Common myeloid progenitor, CD34-positive (primary cell): ENCODE measurements at regions of chr3 and their contacts with region 1.

Region 1: DNA sequence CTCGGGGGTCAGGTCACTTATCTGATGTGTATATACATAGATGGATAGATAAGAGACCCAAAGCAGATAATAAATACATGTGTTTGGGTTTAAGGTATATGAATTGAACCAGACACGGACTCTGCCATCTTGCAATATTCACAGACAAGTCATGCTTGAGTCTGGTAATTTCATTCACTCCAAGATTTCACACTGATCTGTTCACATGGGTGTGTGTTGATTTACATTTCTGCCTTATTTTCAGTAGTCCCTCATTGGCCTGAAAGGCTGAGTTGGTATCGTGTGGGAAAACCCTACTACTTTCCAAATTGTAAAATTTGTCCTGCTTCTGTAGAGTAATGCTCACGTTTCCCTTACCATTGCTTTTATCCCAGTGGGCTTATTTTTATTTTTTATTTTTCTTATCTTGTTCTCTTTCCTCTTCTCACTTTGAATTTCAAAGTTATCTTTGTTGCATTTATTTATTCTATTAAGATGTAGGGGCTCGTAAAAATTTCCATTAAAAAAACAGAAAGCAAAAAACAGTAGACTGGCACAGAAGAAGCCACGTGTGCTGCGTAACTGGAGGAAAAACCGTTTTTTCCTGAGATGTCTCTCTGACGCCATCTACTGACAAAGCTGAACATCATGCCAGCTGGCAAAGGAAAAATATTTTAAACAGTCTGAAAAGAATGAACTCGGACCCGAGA is 10.8 kb upstream of the MFSD1 start:
- DNase-seq: peak; percentile 79 to 87 (median 87)
- H3K4me3 ChIP-seq: peak overlapping the region in 4 of 7 experiments; percentile 2 to 60 (median 19)
- H3K27ac ChIP-seq: no peak overlapping the region
- H3K4me1 ChIP-seq: peaks cover 2 to 5% (median 4%) of the 10 kb centered on the region in 4 experiments
- H3K27me3 ChIP-seq: no peaks in the 10 kb centered on the region

Region 2: DNA sequence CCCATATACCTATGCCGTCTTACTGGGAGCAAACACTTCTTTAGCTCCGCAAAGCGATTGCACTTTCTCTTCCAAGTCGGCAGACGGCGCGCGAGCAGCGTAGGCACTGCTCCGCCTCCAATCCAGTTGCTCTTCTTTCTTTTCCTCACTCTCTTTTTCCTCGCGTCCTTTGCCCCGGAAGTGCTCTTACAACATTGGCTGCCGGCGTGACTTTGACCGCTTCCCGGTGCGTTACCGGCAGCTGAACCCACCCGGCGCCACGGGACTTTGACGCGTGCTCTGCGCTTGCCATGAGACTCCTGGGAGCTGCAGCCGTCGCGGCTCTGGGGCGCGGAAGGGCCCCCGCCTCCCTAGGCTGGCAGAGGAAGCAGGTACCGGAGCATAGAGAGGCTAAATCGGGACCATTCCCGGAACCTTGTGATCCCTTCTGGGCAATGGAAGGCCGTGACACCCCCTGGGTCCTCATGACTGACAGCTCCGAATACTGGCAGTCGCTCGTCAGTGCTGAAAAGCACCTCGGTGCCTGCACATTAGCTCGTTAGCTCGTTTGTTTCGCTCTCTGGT is 146.6 kb before region 1 on chr3 and contains the start of gene GFM1:
- CTCF ChIA-PET with region 1: interaction called, 11 read pairs
- POLR2A ChIA-PET with region 1: no interaction called
- DNase-seq: peak; percentile 97 to 98 (median 97)
- H3K4me3 ChIP-seq: peak within 1 kb of the TSS; percentile 50 to 99 (median 89)
- H3K27ac ChIP-seq: peak within 1 kb of the TSS; percentile 77 to 88
- H3K4me1 ChIP-seq: peaks cover 0 to 12% (median 7%) of the 10 kb centered on the region in 4 experiments
- H3K27me3 ChIP-seq: no peaks in the 10 kb centered on the region

Region 3: GRCh38 chr3:158672293-158673176 is 118.5 kb before region 1 on chr3 and contains the start of gene LXN:
- CTCF ChIA-PET with region 1: interaction called, 10 read pairs
- POLR2A ChIA-PET with region 1: no interaction called
- DNase-seq: peak; percentile 85 to 91 (median 87)
- H3K4me3 ChIP-seq: peak within 1 kb of the TSS; percentile 77 to 89 (median 82)
- H3K27ac ChIP-seq: peak within 1 kb of the TSS; percentile 71 to 78
- H3K4me1 ChIP-seq: peaks cover 2 to 22% (median 16%) of the 10 kb centered on the region in 4 experiments
- H3K27me3 ChIP-seq: no peaks in the 10 kb centered on the region

Region 4: DNA sequence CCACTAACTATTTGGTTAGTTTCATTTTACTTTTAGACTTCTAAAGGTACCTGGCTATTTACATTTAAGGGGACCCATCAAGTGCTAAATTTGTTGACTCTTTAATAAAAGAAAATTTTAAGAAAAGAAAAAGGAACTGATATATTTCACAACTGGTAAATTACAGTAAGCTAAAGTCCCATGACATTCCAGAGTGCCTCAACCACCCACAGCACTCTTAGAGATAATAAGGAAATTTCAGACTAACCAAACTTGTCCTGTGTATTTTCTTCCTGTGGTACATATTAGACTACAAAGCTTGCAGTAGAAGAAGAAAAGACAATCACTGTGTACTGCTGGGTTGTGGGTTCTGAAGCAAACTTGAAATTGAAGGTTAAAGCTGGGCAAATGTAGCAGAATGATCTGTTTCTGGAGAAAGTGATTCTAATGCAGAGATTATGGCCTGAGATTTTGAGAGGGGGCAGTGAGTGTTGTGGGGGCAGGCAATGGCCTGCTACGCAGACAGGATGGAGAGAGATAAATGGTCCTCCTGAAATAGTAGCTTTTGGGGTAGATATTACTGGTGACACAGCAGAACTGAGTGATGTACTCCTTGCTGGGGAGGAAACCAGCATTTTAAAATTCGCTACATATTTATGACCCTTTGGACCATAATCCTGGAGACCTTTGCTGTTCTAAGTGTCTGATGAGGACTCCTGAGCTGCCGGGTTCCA is 13.7 kb before region 1 on chr3:
- CTCF ChIA-PET with region 1: interaction called, 13 read pairs
- POLR2A ChIA-PET with region 1: no interaction called
- DNase-seq: no peak
- H3K4me3 ChIP-seq: no peak overlapping the region
- H3K27ac ChIP-seq: no peak overlapping the region
- H3K4me1 ChIP-seq: no peaks in the 10 kb centered on the region
- H3K27me3 ChIP-seq: no peaks in the 10 kb centered on the region

Region 5: GRCh38 chr3:159260049-159260662 is 469.1 kb after region 1 on chr3:
- CTCF ChIA-PET with region 1: interaction called, 11 read pairs
- POLR2A ChIA-PET with region 1: no interaction called
- DNase-seq: peak; percentile 60 to 83 (median 73)
- H3K4me3 ChIP-seq: no peak overlapping the region
- H3K27ac ChIP-seq: no peak overlapping the region
- H3K4me1 ChIP-seq: no peaks in the 10 kb centered on the region
- H3K27me3 ChIP-seq: peaks cover 0 to 9% (median 3%) of the 10 kb centered on the region in 5 experiments